Gastrocnemius medialis (tissue), 4 donors: ENCODE measurements at regions of chr11 and their contacts with region 1.

Region 1: GRCh38 chr11:57800444-57801182 is 39.0 kb downstream of the CTNND1 start:
- DNase-seq: no peak
- ATAC-seq: peak; percentile 83 to 90
- H3K4me3 ChIP-seq: no peak overlapping the region
- H3K27ac ChIP-seq: peak overlapping the region; percentile 45 to 71 (median 54)
- H3K4me1 ChIP-seq: peaks cover 30 to 42% of the 10 kb centered on the region in 2 donors
- H3K27me3 ChIP-seq: no peaks in the 10 kb centered on the region
- CTCF ChIP-seq: peak; percentile 83 to 92 (median 84)
- POLR2A ChIP-seq: no peak

Region 2: DNA sequence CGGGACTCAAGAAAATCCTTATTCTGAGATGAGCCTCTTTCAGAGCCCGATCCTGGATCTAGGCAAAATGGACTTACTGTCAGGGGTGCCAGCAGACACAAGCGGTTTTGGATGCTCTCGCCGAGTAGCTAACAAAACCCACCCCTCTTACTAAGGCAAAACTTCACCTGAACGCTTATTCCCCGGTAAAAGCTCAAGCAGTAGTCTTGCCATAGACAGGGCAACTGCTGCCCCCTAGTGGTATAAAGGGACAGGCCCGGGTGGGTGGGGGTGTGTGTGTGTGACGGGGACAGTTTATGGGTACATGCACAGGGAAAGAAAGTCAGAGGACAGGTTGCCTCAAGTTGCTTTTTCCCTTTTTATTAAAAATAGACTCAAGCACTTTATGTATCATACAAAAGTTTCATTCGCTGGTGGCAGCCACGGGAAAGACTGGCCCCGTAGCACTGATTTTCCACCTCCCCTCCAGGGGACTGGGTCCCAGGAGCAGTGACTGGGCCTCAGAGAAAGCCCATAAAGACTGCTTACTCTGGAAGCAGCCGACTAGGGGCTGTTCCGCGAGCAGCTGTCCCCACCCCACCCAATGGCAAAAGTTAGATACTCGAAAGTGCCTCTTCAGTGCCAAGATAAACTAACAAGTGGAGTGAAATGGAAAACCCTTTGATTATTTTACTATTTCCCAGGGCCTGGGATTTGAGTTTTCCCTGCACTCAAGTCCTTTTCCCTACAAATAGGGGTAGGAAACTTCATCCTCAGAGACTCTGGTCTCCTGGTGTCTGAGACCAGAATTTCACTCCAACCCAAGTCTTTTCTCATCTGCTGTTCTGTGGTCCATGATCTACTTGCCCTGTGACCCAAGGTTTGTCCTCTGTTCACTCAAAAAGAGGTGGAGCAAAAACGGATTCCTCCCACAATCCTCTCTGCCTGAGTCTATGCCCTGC is 155.6 kb before region 1 on chr11:
- in situ Hi-C with region 1: no loop called
- intact Hi-C with region 1: loop called (anchors 2 kb)
- DNase-seq: peak; percentile 66 to 73
- ATAC-seq: peak; percentile 69 to 76
- H3K4me3 ChIP-seq: no peak overlapping the region
- H3K27ac ChIP-seq: peak overlapping the region; percentile 29 to 56 (median 44)
- H3K4me1 ChIP-seq: peaks cover 17 to 22% of the 10 kb centered on the region in 2 donors
- H3K27me3 ChIP-seq: peaks cover 39 to 45% (median 43%) of the 10 kb centered on the region in 3 donors
- CTCF ChIP-seq: peak; percentile 71 to 96 (median 78)
- POLR2A ChIP-seq: no peak

Region 3: GRCh38 chr11:57741132-57742086 is 59.2 kb before region 1 on chr11 and contains the start of gene SELENOH:
- in situ Hi-C with region 1: loop called in 3 of 4 experiments (anchors 5 to 10 kb)
- intact Hi-C with region 1: loop called (anchors 5 kb)
- DNase-seq: peak; percentile 95 to 96
- ATAC-seq: peak; percentile 95 to 97
- H3K4me3 ChIP-seq: peak within 1 kb of the TSS; percentile 77 to 100 (median 90)
- H3K27ac ChIP-seq: peak within 1 kb of the TSS; percentile 94 to 99 (median 98)
- H3K4me1 ChIP-seq: peaks cover 15 to 17% of the 10 kb centered on the region in 2 donors
- H3K27me3 ChIP-seq: no peaks in the 10 kb centered on the region
- CTCF ChIP-seq: no peak
- POLR2A ChIP-seq: peak; percentile 84
- total RNA-seq, gene SELENOH: 94.7 to 145 (median 132) TPM

Region 4: DNA sequence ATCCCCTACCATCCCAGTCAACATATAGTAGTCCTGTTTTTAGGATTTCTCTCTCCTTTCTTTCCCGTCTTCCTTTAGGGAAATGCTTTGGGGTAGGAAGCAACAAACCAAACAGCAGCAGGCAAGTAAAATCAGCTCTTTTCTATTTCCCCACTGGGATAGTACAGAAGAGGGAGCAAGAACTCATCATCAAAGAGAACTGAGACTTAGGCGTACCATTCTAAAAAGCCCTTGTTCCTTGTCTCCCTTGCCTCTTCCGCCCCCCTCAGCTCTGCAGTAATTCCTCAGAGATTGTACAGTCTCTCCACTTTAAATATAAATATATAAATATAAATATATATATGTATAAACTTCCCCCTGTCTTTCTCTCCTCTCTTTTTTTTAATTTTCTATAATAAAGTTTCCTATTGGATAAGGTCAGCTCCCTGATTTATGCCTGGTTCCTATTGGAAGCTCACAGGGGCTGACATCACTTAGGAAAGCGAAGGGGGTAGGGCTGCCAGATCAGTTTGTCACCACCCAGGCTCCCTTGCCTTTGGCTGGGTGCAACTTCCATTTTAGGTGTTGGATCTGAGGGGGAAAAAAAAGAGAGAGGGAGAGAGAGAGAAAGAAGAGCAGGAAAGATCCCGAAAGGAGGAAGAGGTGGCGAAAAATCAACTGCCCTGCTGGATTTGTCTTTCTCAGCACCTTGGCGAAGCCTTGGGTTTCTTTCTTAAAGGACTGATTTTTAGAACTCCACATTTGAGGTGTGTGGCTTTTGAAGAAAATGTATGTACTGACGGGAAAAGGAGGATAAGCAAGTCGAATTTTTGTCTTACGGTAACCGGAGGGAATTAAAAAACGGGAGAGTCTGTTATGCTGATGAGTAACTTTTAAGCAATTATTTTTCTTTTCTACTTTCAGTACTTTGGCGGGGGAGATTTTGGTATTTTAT is 39.0 kb before region 1 on chr11 and contains the start of gene CTNND1:
- in situ Hi-C with region 1: no loop called
- intact Hi-C with region 1: loop called (anchors 2 kb)
- DNase-seq: peak; percentile 92 to 95
- ATAC-seq: peak; percentile 100
- H3K4me3 ChIP-seq: peak within 1 kb of the TSS; percentile 66 to 83 (median 78)
- H3K27ac ChIP-seq: peak within 1 kb of the TSS; percentile 90 to 97 (median 93)
- H3K4me1 ChIP-seq: peaks cover 34 to 37% of the 10 kb centered on the region in 2 donors
- H3K27me3 ChIP-seq: no peaks in the 10 kb centered on the region
- CTCF ChIP-seq: no peak
- POLR2A ChIP-seq: peak; percentile 67 to 80
- total RNA-seq, gene CTNND1: 19.7 to 29.8 (median 24.5) TPM

Region 5: DNA sequence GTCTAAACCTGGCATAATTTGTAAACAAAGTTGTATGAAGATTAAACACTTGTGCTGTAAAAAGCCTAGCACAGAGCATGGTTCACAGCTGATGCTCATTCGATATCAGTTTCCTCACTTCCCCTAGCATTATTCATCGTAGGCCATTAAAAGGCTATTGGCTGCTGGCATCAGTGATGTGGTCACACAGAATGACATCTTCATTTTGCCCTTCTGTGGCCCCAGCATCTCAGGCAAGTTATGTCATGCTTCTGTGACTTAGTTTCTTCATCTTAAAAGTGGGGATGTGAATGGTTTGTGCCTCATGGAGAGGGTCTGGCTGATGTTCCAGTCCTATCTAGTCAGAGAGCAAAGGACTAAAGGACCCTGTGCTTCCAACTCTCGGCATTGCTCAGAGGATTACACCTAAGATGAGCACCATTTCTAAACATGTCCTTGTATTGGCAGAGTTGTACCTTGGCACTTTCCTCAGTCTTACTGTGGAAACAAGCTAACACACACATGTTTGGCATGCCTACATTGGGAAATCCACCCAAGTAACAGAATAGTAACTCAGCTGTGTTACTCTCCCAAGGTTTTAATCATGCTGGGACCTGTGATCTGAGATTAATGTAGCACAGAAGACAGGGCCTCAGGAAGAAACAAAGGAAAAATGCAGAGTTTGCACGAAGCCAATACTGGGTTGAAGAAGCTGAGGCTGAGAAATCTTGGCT is 139.6 kb after region 1 on chr11:
- in situ Hi-C with region 1: no loop called
- intact Hi-C with region 1: no loop called
- DNase-seq: no peak
- ATAC-seq: no peak
- H3K4me3 ChIP-seq: no peak overlapping the region
- H3K27ac ChIP-seq: no peak overlapping the region
- H3K4me1 ChIP-seq: no peaks in the 10 kb centered on the region
- H3K27me3 ChIP-seq: no peaks in the 10 kb centered on the region
- CTCF ChIP-seq: no peak
- POLR2A ChIP-seq: no peak